MCF 10A (cell line): ENCODE measurements at regions of chr17 and their contacts with region 1.

Region 1: GRCh38 chr17:30104575-30105339 is 11.9 kb upstream of the NSRP1 start:
- DNase-seq: peak; percentile 80
- H3K4me3 Mint-ChIP-seq: peak overlapping the region; percentile 66
- H3K27ac Mint-ChIP-seq: no peak overlapping the region
- H3K4me1 Mint-ChIP-seq: peaks cover 5% of the 10 kb centered on the region
- H3K27me3 Mint-ChIP-seq: no peaks in the 10 kb centered on the region
- CTCF ChIP-seq: peak; percentile 88

Region 2: GRCh38 chr17:29857823-29858222 is 246.9 kb before region 1 on chr17:
- CTCF ChIA-PET with region 1: no interaction called
- POLR2A ChIA-PET with region 1: no interaction called
- intact Hi-C with region 1: no loop called
- DNase-seq: no peak
- H3K4me3 Mint-ChIP-seq: no peak overlapping the region
- H3K27ac Mint-ChIP-seq: no peak overlapping the region
- H3K4me1 Mint-ChIP-seq: peaks cover 20% of the 10 kb centered on the region
- H3K27me3 Mint-ChIP-seq: no peaks in the 10 kb centered on the region
- CTCF ChIP-seq: no peak

Region 3: DNA sequence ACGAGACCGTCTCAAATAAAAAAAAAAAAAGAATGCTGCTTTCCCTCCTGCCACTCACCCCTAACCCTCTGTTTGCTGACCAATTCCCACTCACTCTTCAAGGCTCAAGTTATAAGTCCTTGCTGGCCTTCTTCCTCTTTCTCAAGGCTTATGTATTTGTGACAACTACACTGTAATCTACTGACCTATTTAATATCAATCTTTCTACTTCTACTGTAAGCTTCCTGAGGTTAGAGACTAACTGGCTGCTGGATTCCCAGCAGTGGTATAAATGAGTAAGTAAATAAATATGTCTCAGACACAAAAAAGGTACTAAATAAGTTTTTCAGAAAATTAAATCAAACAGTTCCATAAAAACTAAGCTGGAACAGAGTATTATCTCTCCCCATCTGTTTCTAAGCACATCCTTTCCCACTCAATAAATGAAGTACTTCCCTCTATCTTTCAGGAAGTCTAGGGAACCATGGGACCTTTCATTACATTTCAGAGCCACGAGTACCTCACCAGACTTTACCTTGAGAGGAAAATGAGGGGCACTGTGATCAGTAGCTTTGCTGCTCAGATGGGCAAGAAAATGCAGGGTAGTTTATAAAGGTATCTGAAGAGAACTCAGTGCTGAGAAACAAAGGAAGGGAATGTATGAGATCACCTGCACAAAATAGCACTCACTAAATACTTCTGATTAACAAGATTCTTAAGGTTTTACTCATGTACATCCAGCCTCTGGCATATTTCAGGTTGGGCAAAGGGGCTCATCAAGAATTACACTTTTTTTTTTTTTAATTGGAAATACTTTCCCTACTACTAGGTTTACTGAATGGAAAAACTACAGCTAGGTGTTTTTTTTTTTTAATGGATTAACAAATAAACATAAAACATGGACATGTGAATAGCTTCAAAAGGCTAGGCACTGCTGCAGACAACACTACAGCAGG is 185.6 kb before region 1 on chr17:
- CTCF ChIA-PET with region 1: interaction called, 13 read pairs
- POLR2A ChIA-PET with region 1: no interaction called
- intact Hi-C with region 1: no loop called
- DNase-seq: peak; percentile 5
- H3K4me3 Mint-ChIP-seq: peak overlapping the region; percentile 2
- H3K27ac Mint-ChIP-seq: peak overlapping the region; percentile 33
- H3K4me1 Mint-ChIP-seq: peaks cover 16% of the 10 kb centered on the region
- H3K27me3 Mint-ChIP-seq: no peaks in the 10 kb centered on the region
- CTCF ChIP-seq: no peak

Region 4: DNA sequence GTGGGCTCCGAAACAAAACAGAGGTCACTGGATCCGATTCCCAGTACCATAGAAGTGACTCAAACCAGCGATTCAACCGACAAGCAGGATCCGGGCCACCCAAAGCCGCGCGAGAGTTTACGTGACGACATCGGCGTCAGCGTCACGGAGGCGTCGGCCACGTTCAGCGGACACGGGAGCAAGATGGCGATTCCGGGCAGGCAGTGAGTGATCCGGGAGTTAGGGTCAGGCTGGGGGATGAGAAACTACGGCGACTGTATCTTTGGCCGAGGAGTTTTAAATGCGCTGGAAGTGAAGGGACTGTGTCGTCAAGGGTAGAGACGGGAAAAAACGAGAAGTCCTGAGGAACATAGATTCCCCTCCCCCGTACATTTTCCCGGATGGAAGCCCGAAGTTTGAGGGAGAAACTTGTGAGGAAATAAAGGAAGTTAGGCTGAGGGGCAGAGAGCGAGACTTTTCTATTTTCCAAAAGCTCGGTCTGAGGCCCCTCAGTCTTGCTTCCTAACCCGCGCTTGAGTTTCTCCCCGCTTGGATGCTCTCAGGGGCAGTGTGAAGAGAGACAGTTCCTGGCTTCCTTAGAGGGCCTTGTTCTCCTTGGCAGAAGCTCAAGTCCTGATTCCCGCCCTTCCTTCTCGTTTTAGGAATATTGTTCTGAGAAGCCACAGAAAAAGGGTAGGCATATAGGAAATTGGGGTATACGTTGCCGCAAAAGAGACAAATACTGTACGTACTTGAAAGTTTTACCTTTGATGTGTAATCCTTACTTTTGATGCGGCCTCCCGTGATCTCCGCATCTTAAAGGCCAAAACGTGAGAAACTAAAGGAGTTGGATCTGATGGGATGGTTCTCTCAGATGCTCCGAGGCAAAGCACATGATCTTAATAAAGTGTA is 12.1 kb after region 1 on chr17 and contains the start of gene NSRP1:
- CTCF ChIA-PET with region 1: interaction called, 45 read pairs
- POLR2A ChIA-PET with region 1: interaction called, 24 read pairs
- intact Hi-C with region 1: no loop called
- DNase-seq: peak; percentile 95
- H3K4me3 Mint-ChIP-seq: peak within 1 kb of the TSS; percentile 97
- H3K27ac Mint-ChIP-seq: peak within 1 kb of the TSS; percentile 100
- H3K4me1 Mint-ChIP-seq: peaks cover 15% of the 10 kb centered on the region
- H3K27me3 Mint-ChIP-seq: no peaks in the 10 kb centered on the region
- CTCF ChIP-seq: no peak
- total RNA-seq, gene NSRP1: 40.8 and 57.3 TPM in 2 replicates

Region 5: GRCh38 chr17:30236766-30237165 is 132.0 kb after region 1 on chr17:
- CTCF ChIA-PET with region 1: interaction called, 15 read pairs
- POLR2A ChIA-PET with region 1: no interaction called
- intact Hi-C with region 1: loop called (anchors 2 kb)
- DNase-seq: peak; percentile 57
- H3K4me3 Mint-ChIP-seq: peak overlapping the region; percentile 35
- H3K27ac Mint-ChIP-seq: no peak overlapping the region
- H3K4me1 Mint-ChIP-seq: peaks cover 9% of the 10 kb centered on the region
- H3K27me3 Mint-ChIP-seq: peaks cover 57% of the 10 kb centered on the region
- CTCF ChIP-seq: peak; percentile 37

Region 6: GRCh38 chr17:30258503-30258902 is 153.7 kb after region 1 on chr17:
- CTCF ChIA-PET with region 1: no interaction called
- POLR2A ChIA-PET with region 1: no interaction called
- intact Hi-C with region 1: no loop called
- DNase-seq: no peak
- H3K4me3 Mint-ChIP-seq: no peak overlapping the region
- H3K27ac Mint-ChIP-seq: peak overlapping the region; percentile 14
- H3K4me1 Mint-ChIP-seq: no peaks in the 10 kb centered on the region
- H3K27me3 Mint-ChIP-seq: no peaks in the 10 kb centered on the region
- CTCF ChIP-seq: no peak

Region 7: GRCh38 chr17:30291543-30292285 is 187.0 kb after region 1 on chr17 and contains the start of gene BLMH:
- CTCF ChIA-PET with region 1: interaction called, 10 read pairs
- POLR2A ChIA-PET with region 1: no interaction called
- intact Hi-C with region 1: no loop called
- DNase-seq: peak; percentile 77
- H3K4me3 Mint-ChIP-seq: peak within 1 kb of the TSS; percentile 84
- H3K27ac Mint-ChIP-seq: peak within 1 kb of the TSS; percentile 33
- H3K4me1 Mint-ChIP-seq: no peaks in the 10 kb centered on the region
- H3K27me3 Mint-ChIP-seq: no peaks in the 10 kb centered on the region
- CTCF ChIP-seq: no peak
- total RNA-seq, gene BLMH: 28.2 and 28.3 TPM in 2 replicates

Region 8: DNA sequence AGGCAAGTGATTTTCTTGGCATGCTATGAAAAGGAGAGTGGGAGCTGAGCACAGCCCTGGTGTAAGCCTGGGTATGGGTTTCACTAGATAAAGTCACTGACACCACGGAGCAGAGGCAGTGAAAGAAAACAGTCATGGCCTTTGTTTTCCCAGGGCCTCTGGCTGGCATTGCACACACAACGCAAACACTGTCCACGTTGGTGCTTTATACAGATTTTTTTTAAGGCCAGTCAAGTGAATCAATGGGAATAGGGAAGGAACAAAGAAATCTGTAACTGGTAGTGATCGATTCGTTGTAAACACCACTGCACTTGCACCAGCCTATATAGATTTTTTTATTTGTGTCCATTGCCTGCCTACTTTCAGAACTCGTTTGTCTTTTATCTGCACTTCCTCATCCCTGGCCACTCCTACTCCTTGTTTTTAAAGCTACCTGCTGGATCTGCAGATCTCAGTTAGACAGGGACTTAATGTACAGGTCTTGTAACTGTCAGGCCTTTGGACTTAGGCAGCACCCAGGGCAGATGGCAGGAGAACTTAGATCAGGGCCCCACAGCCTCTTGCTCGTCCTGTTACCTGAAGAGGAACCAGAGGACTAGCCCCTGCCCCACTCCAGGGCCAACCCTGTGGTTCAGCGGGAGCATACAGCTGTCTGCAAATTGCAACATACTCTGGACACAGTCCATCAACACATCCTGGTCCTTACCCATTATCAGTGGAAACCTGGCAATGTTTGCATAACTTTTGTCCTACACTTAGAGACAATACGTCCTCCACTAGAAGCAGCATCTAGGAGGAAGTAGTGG is 239.7 kb after region 1 on chr17:
- CTCF ChIA-PET with region 1: interaction called, 13 read pairs
- POLR2A ChIA-PET with region 1: no interaction called
- intact Hi-C with region 1: no loop called
- DNase-seq: peak; percentile 89
- H3K4me3 Mint-ChIP-seq: peak overlapping the region; percentile 17
- H3K27ac Mint-ChIP-seq: peak overlapping the region; percentile 52
- H3K4me1 Mint-ChIP-seq: peaks cover 20% of the 10 kb centered on the region
- H3K27me3 Mint-ChIP-seq: no peaks in the 10 kb centered on the region
- CTCF ChIP-seq: no peak

Region 9: DNA sequence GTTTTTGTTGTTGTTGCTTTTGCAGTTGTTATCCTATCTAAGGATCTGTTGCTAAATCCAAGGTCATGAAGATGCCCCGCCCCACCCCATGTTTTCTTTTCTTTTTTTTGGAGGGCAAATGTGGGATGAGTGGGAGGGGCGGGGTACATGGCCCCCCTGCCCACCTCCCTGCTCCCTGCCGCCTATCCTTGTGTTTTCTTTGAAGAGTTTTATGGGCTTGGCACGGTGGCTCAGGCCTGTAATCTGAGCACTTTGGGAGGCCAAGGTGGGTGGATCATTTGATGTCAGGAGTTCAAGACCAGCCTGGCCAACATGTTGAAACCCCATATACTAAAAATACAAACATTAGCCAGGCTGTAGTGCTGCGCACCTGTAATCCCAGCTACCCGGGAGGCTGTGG is 353.6 kb after region 1 on chr17:
- CTCF ChIA-PET with region 1: no interaction called
- POLR2A ChIA-PET with region 1: no interaction called
- intact Hi-C with region 1: no loop called
- DNase-seq: no peak
- H3K4me3 Mint-ChIP-seq: no peak overlapping the region
- H3K27ac Mint-ChIP-seq: no peak overlapping the region
- H3K4me1 Mint-ChIP-seq: no peaks in the 10 kb centered on the region
- H3K27me3 Mint-ChIP-seq: no peaks in the 10 kb centered on the region
- CTCF ChIP-seq: no peak